A673 (cell line): ENCODE measurements at regions of chr3 and their contacts with region 1.

Region 1: GRCh38 chr3:177804032-177804431 is 606.8 kb upstream of the TBL1XR1 start:
- DNase-seq: no peak
- H3K4me3 ChIP-seq: no peak overlapping the region
- H3K27ac ChIP-seq: no peak overlapping the region
- H3K4me1 ChIP-seq: no peaks in the 10 kb centered on the region
- H3K27me3 ChIP-seq: no peaks in the 10 kb centered on the region
- CTCF ChIP-seq: no peak

Region 2: GRCh38 chr3:177906126-177906511 is 102.1 kb after region 1 on chr3:
- CTCF ChIA-PET with region 1: no interaction called
- POLR2A ChIA-PET with region 1: no interaction called
- intact Hi-C with region 1: no loop called
- DNase-seq: no peak
- H3K4me3 ChIP-seq: no peak overlapping the region
- H3K27ac ChIP-seq: no peak overlapping the region
- H3K4me1 ChIP-seq: no peaks in the 10 kb centered on the region
- H3K27me3 ChIP-seq: no peaks in the 10 kb centered on the region
- CTCF ChIP-seq: no peak

Region 3: GRCh38 chr3:178284180-178284579 is 480.1 kb after region 1 on chr3:
- CTCF ChIA-PET with region 1: interaction called, 14 read pairs
- POLR2A ChIA-PET with region 1: no interaction called
- intact Hi-C with region 1: no loop called
- DNase-seq: no peak
- H3K4me3 ChIP-seq: no peak overlapping the region
- H3K27ac ChIP-seq: no peak overlapping the region
- H3K4me1 ChIP-seq: no peaks in the 10 kb centered on the region
- H3K27me3 ChIP-seq: no peaks in the 10 kb centered on the region
- CTCF ChIP-seq: no peak